Activated naive CD4-positive, alpha-beta T cell treated with anti-CD3 and anti-CD28 coated beads for 36 hours (primary cell): ENCODE measurements at regions of chr9 and their contacts with region 1.

Region 1: GRCh38 chr9:4228606-4229005 is 71.3 kb downstream of the GLIS3 start:
- DNase-seq: no peak
- H3K4me3 Mint-ChIP-seq: no peak overlapping the region
- H3K27ac Mint-ChIP-seq: no peak overlapping the region
- H3K4me1 Mint-ChIP-seq: peaks cover 16% of the 10 kb centered on the region
- H3K27me3 Mint-ChIP-seq: no peaks in the 10 kb centered on the region

Region 2: DNA sequence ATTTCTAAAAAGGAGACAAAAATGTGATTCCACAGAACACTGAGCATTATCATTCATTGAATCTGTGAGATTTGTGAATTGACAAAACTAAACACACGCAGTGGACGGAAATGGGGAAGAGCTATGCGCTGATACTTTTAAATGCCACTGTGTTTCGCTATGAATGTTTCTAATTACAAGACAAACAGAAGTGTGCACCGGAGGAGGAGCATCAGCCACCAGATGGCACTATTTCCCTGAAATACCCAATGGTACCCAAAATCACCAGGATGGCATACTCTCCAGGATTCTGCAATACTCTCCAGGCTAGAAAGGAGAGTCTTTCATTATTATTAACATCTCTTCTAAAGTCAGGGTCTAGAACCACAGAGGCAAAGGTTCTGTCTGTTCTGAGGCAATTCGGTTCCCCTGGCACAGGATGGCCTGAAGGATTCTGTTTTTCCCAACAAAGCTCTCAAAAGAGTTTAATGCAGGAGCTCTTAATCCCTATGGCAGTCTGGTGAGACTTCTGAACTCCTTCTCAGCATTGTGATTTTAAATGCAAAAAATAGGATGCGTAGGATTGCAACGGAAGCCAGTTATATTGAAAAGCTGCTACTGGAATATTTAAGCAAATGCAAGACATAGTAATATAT is 1370.9 kb before region 1 on chr9:
- CTCF ChIA-PET with region 1: no interaction called
- intact Hi-C with region 1: loop called (anchors 5 kb)
- DNase-seq: peak; percentile 84
- H3K4me3 Mint-ChIP-seq: no peak overlapping the region
- H3K27ac Mint-ChIP-seq: no peak overlapping the region
- H3K4me1 Mint-ChIP-seq: peaks cover 6% of the 10 kb centered on the region
- H3K27me3 Mint-ChIP-seq: peaks cover 18% of the 10 kb centered on the region

Region 3: DNA sequence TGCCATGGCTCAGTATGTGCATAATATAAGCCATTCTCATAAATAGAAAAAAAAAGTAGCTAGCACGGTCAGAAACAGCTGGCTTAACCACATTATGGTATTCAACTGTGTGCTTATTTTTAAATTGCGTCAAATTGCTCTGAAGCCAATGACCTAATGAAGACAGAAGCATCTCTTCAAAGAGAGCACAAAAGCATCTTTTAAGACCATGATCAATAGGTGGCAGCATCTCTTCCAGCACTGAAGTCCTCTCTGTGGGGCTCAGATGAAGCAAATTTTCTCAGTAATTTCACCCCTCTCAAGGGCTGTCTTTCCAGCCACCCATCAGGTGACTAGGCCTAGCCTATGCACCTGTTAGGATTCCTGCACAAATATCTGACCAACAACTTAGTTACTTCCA is 180.2 kb before region 1 on chr9:
- CTCF ChIA-PET with region 1: no interaction called
- intact Hi-C with region 1: loop called (anchors 2 kb)
- DNase-seq: no peak
- H3K4me3 Mint-ChIP-seq: no peak overlapping the region
- H3K27ac Mint-ChIP-seq: no peak overlapping the region
- H3K4me1 Mint-ChIP-seq: no peaks in the 10 kb centered on the region
- H3K27me3 Mint-ChIP-seq: no peaks in the 10 kb centered on the region

Region 4: GRCh38 chr9:4077499-4078102 is 151.0 kb before region 1 on chr9:
- CTCF ChIA-PET with region 1: interaction called, 3 read pairs
- intact Hi-C with region 1: loop called (anchors 2 kb)
- DNase-seq: peak; percentile 76
- H3K4me3 Mint-ChIP-seq: no peak overlapping the region
- H3K27ac Mint-ChIP-seq: no peak overlapping the region
- H3K4me1 Mint-ChIP-seq: no peaks in the 10 kb centered on the region
- H3K27me3 Mint-ChIP-seq: peaks cover 3% of the 10 kb centered on the region

Region 5: DNA sequence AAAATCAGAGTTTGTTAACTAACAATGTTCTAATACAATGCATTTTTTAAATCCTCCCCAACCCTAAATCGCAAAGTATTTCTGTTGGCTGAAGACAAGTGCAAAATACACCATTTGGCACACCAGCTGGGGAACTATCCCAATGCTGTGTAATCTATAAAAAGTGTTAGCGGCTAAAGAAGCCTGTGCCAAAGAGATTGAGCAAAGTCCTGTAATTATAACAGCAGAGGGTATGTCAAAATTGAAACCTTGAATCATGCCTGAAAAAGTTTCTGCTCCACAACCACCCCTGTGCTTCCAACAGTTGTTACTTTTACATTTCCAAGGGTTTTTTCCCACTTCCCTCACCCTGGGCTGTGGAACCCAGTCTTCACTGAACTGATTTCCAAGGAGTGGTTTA is 350.4 kb after region 1 on chr9:
- CTCF ChIA-PET with region 1: no interaction called
- intact Hi-C with region 1: no loop called
- DNase-seq: no peak
- H3K4me3 Mint-ChIP-seq: no peak overlapping the region
- H3K27ac Mint-ChIP-seq: no peak overlapping the region
- H3K4me1 Mint-ChIP-seq: no peaks in the 10 kb centered on the region
- H3K27me3 Mint-ChIP-seq: no peaks in the 10 kb centered on the region